GM12878 (cell line): ENCODE measurements at regions of chr4 and their contacts with region 1.

Region 1: GRCh38 chr4:59247032-59247431 is 1953.1 kb upstream of the ADGRL3 start:
- DNase-seq: no peak
- ATAC-seq: no peak
- H3K4me3 ChIP-seq: no peak overlapping the region
- H3K27ac ChIP-seq: no peak overlapping the region
- H3K4me1 ChIP-seq: no peaks in the 10 kb centered on the region
- H3K27me3 ChIP-seq: no peaks in the 10 kb centered on the region
- CTCF ChIP-seq: no peak; a peak in 1 of 6 replicates
- EP300 ChIP-seq: no peak
- POLR2A ChIP-seq: no peak
- RAD21 ChIP-seq: 0 out of 2 replicates have a peak, but pooled peaks have one; percentile 18

Region 2: GRCh38 chr4:58940167-58940566 is 306.9 kb before region 1 on chr4:
- CTCF ChIA-PET with region 1: no interaction called
- POLR2A ChIA-PET with region 1: no interaction called
- RAD21 ChIA-PET with region 1: no interaction called
- SMC1A ChIA-PET with region 1: no interaction called
- in situ Hi-C with region 1: no loop called
- intact Hi-C with region 1: no loop called
- DNase-seq: no peak
- ATAC-seq: peak; percentile 87
- H3K4me3 ChIP-seq: no peak overlapping the region
- H3K27ac ChIP-seq: no peak overlapping the region
- H3K4me1 ChIP-seq: no peaks in the 10 kb centered on the region
- H3K27me3 ChIP-seq: no peaks in the 10 kb centered on the region
- CTCF ChIP-seq: no peak
- EP300 ChIP-seq: no peak
- POLR2A ChIP-seq: no peak
- RAD21 ChIP-seq: no peak

Region 3: DNA sequence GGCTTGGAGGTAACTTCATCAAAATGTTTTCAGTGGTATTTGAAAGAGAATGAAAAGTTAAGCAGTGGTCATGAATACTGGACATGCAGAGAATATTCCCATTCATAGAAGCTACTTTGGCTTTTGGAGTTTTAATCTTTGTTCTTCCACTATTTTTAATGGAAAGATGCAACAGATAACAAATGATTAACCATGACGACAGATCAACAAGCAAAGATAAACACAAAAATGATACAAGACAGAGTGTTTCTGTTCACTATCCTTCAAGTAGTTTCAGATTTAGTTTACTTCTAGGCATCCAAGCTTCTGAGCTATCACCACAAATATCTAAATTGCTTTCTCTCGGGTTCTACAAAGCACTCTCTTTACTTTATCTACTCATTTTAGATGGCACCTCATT is 948.2 kb after region 1 on chr4:
- CTCF ChIA-PET with region 1: interaction called, 15 read pairs
- POLR2A ChIA-PET with region 1: no interaction called
- RAD21 ChIA-PET with region 1: interaction called, 3 read pairs
- SMC1A ChIA-PET with region 1: no interaction called
- in situ Hi-C with region 1: loop called (anchors 10 kb)
- intact Hi-C with region 1: loop called (anchors 2 kb)
- DNase-seq: no peak
- ATAC-seq: no peak
- H3K4me3 ChIP-seq: no peak overlapping the region
- H3K27ac ChIP-seq: no peak overlapping the region
- H3K4me1 ChIP-seq: no peaks in the 10 kb centered on the region
- H3K27me3 ChIP-seq: no peaks in the 10 kb centered on the region
- CTCF ChIP-seq: no peak
- EP300 ChIP-seq: no peak
- POLR2A ChIP-seq: no peak
- RAD21 ChIP-seq: no peak

Region 4: GRCh38 chr4:60201057-60201673 is 954.1 kb after region 1 on chr4:
- CTCF ChIA-PET with region 1: interaction called, 15 read pairs
- POLR2A ChIA-PET with region 1: no interaction called
- RAD21 ChIA-PET with region 1: interaction called, 3 read pairs
- SMC1A ChIA-PET with region 1: no interaction called
- in situ Hi-C with region 1: loop called (anchors 10 kb)
- intact Hi-C with region 1: loop called (anchors 2 kb)
- DNase-seq: no peak
- ATAC-seq: peak; percentile 82
- H3K4me3 ChIP-seq: no peak overlapping the region
- H3K27ac ChIP-seq: no peak overlapping the region
- H3K4me1 ChIP-seq: no peaks in the 10 kb centered on the region
- H3K27me3 ChIP-seq: no peaks in the 10 kb centered on the region
- CTCF ChIP-seq: peak; percentile 78 to 82 (median 79)
- EP300 ChIP-seq: no peak
- POLR2A ChIP-seq: no peak
- RAD21 ChIP-seq: peak; percentile 77